H1 (cell line): ENCODE measurements at regions of chr3 and their contacts with region 1.

Region 1: GRCh38 chr3:60742606-60743145 is 508.6 kb downstream of the FHIT start:
- DNase-seq: peak; percentile 61 to 69
- H3K4me3 ChIP-seq: no peak overlapping the region
- H3K27ac ChIP-seq: no peak overlapping the region
- H3K4me1 ChIP-seq: peaks cover 0 to 16% (median 10%) of the 10 kb centered on the region in 4 experiments; a peak in 4 of 7 replicates
- H3K27me3 ChIP-seq: peaks cover 0 to 2% (median 0%) of the 10 kb centered on the region in 4 experiments; a peak in 1 of 7 replicates
- CTCF ChIP-seq: peak; percentile 84 to 90 (median 84)
- EP300 ChIP-seq: no peak
- POLR2A ChIP-seq: no peak
- RAD21 ChIP-seq: peak; percentile 79 to 87

Region 2: GRCh38 chr3:60582288-60582687 is 160.4 kb before region 1 on chr3:
- CTCF ChIA-PET with region 1: interaction called, 45 read pairs
- POLR2A ChIA-PET with region 1: no interaction called
- DNase-seq: no peak
- H3K4me3 ChIP-seq: no peak overlapping the region
- H3K27ac ChIP-seq: no peak overlapping the region
- H3K4me1 ChIP-seq: peaks cover 0 to 9% (median 0%) of the 10 kb centered on the region in 4 experiments; a peak in 1 of 7 replicates
- H3K27me3 ChIP-seq: no peaks in the 10 kb centered on the region
- CTCF ChIP-seq: peak in 2 of 3 experiments; percentile 7 to 14; a peak in 2 of 4 replicates
- EP300 ChIP-seq: no peak
- POLR2A ChIP-seq: no peak
- RAD21 ChIP-seq: peak; percentile 67

Region 3: GRCh38 chr3:60630953-60631352 is 111.7 kb before region 1 on chr3:
- CTCF ChIA-PET with region 1: no interaction called
- POLR2A ChIA-PET with region 1: no interaction called
- DNase-seq: no peak
- H3K4me3 ChIP-seq: no peak overlapping the region
- H3K27ac ChIP-seq: no peak overlapping the region
- H3K4me1 ChIP-seq: peaks cover 0 to 5% (median 3%) of the 10 kb centered on the region in 4 experiments; a peak in 3 of 7 replicates
- H3K27me3 ChIP-seq: no peaks in the 10 kb centered on the region
- CTCF ChIP-seq: no peak
- EP300 ChIP-seq: no peak
- POLR2A ChIP-seq: no peak
- RAD21 ChIP-seq: no peak

Region 4: DNA sequence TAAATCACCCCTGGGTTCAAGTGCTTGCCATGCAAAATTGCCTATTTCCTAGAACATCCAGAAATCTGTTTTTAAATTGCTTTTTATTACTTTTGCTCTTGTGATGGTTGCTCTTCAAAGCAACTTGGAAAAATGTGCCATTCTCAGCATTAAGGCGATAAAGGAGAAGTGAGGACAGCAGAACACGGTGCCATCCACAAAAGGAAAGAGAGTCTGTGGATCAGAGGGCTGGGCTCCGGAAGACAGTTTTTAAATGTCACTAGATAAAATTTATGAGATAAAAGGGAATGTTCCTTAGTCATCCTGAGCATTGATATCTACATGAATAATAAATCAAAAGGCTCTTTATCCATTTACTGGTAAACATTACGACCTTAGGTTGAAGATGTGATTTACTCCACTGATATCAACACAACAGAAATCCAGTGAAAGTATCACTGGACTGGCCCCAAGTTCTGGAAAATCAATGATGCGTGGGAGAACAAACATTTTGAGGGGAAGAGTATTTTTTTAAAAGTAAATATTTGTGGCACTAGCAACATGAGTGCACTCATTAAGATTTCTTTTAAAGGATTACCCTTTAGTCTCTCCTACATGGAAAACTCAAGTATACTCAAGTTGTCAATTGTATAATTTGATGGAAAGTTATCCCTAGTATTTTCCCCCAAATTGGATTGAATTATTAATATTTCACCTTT is 46.1 kb before region 1 on chr3:
- CTCF ChIA-PET with region 1: no interaction called
- POLR2A ChIA-PET with region 1: no interaction called
- DNase-seq: no peak
- H3K4me3 ChIP-seq: no peak overlapping the region
- H3K27ac ChIP-seq: no peak overlapping the region
- H3K4me1 ChIP-seq: peaks cover 0 to 9% (median 0%) of the 10 kb centered on the region in 4 experiments; a peak in 2 of 7 replicates
- H3K27me3 ChIP-seq: no peaks in the 10 kb centered on the region
- CTCF ChIP-seq: no peak
- EP300 ChIP-seq: no peak
- POLR2A ChIP-seq: no peak
- RAD21 ChIP-seq: no peak

Region 5: DNA sequence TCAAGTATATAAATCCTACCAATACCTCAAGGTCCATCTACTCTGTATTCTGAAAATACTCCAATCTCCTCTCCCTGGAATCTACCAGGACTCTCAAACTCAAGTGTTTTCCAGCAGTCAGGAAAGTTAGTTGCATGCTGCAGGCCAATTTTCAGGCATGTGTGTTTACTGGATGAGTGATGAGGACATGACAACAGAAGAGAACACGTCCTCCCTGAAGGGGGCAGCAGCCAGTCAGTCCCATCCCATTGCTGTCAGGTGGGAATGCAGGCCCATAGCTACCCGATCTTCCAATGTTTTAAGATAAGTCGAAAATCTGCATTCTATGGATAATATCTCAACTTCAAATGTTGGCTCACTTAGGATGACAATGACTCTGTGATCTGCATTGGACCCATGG is 12.4 kb after region 1 on chr3:
- CTCF ChIA-PET with region 1: interaction called, 22 read pairs
- POLR2A ChIA-PET with region 1: no interaction called
- DNase-seq: peak in 1 of 2 experiments; percentile 64
- H3K4me3 ChIP-seq: no peak overlapping the region
- H3K27ac ChIP-seq: no peak overlapping the region
- H3K4me1 ChIP-seq: peaks cover 0 to under 1% (median 0%) of the 10 kb centered on the region in 4 experiments; a peak in 1 of 7 replicates
- H3K27me3 ChIP-seq: no peaks in the 10 kb centered on the region
- CTCF ChIP-seq: peak; percentile 63 to 93 (median 90)
- EP300 ChIP-seq: no peak
- POLR2A ChIP-seq: no peak
- RAD21 ChIP-seq: peak; percentile 84 to 90